ENCODE measurements at regions of chr18 and their contacts with region 1.

Region 1: GRCh38 chr18:33201509-33201926 is 239.0 kb downstream of the CCDC178 start:
- DNase-seq: peak; percentile 64
- ATAC-seq: peak; percentile 85
- H3K4me3 Mint-ChIP-seq: peak overlapping the region; percentile 50
- H3K27ac Mint-ChIP-seq: no peak overlapping the region; the same call in 1 of the 2 replicates
- H3K4me1 Mint-ChIP-seq: peaks cover 11% of the 10 kb centered on the region
- H3K27me3 Mint-ChIP-seq: no peaks in the 10 kb centered on the region
- CTCF ChIP-seq: peak; percentile 62

Region 2: DNA sequence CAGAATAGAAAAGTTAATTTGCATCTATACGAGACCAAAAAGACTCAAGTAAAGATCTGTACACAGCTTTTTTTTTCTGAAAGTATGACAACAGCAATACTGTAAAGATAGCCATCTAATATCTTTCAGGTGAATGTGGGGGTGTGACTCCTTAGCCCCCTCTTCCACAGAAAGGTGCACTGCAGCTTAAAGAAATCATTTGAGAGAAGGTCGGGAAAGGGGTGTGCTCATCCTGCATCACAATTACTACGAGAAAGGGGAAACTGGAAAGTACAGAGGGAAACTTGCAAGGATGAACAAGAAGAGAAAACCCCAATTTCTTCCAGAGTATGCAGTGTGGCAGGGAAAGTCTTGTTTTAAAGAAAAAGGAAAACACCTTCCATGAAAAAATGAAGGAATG is 16.6 kb before region 1 on chr18:
- CTCF ChIA-PET with region 1: interaction called, 24 read pairs
- POLR2A ChIA-PET with region 1: no interaction called
- DNase-seq: peak; percentile 12
- ATAC-seq: peak; percentile 96
- H3K4me3 Mint-ChIP-seq: no peak overlapping the region
- H3K27ac Mint-ChIP-seq: no peak overlapping the region
- H3K4me1 Mint-ChIP-seq: 0 out of 2 replicates have a peak, but pooled peaks cover 4% of the 10 kb centered on the region
- H3K27me3 Mint-ChIP-seq: no peaks in the 10 kb centered on the region
- CTCF ChIP-seq: 0 out of 2 replicates have a peak, but pooled peaks have one; percentile 10

Measured in WTC11 (cell line).